Activated CD8-positive, alpha-beta T cell treated with anti-CD3 and anti-CD28 coated beads, Interleukin-2, amount 10 ng/mL, durations not matched to agents 7 days and 5 days (primary cell): ENCODE measurements at regions of chr2 and their contacts with region 1.

Region 1: GRCh38 chr2:215949991-215950404 is 63.4 kb downstream of the MREG start:
- DNase-seq: no peak
- ATAC-seq: peak; percentile 72
- H3K4me3 Mint-ChIP-seq: no peak overlapping the region
- H3K27ac Mint-ChIP-seq: no peak overlapping the region
- H3K4me1 Mint-ChIP-seq: no peaks in the 10 kb centered on the region
- H3K27me3 Mint-ChIP-seq: no peaks in the 10 kb centered on the region

Region 2: DNA sequence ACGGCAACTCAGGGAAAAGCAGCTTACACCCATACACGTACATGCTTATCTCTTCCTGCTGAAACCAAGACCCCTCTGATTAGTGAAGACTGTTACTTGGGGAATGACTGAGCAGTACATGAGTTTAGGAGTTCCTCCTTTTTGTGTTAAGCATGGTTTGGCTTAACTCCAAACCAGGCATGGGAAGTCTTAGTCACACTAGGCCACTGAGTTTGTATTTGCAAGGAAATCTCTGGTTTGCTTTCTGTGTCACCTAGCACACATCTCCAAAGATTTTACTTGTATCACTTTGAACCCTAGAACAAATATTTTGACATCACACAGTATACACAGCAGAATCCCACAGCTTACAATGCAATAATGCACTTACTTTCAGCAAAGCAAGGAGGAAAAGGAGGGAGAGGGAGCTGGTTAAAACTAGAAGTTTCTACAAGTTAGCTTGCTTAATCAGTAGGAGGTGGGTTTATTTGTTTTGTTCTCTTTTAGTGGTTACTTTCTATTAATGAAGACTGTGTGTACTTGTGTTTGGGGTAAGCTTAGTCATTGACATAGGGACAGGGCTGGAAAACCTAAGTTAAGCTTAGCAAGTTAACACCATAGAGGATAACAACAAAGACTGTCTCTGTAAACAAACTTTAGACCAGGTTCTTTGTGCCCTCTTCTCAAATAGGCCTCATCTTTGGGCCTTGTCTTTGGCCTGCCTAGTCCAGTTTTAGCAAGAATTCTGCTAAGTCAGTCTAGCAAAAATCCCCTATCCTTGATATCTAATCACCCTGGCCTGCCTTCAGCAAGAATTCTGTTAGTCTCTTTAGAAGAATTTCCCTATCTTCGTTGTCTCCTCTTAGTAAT is 156.0 kb before region 1 on chr2:
- CTCF ChIA-PET with region 1: no interaction called
- POLR2A ChIA-PET with region 1: no interaction called
- DNase-seq: no peak
- ATAC-seq: no peak
- H3K4me3 Mint-ChIP-seq: no peak overlapping the region
- H3K27ac Mint-ChIP-seq: no peak overlapping the region
- H3K4me1 Mint-ChIP-seq: peaks cover 14% of the 10 kb centered on the region
- H3K27me3 Mint-ChIP-seq: no peaks in the 10 kb centered on the region

Region 3: GRCh38 chr2:215931256-215931903 is 18.6 kb before region 1 on chr2:
- CTCF ChIA-PET with region 1: interaction called, 11 read pairs
- POLR2A ChIA-PET with region 1: no interaction called
- DNase-seq: peak; percentile 74
- ATAC-seq: peak; percentile 80
- H3K4me3 Mint-ChIP-seq: no peak overlapping the region
- H3K27ac Mint-ChIP-seq: no peak overlapping the region
- H3K4me1 Mint-ChIP-seq: peaks cover 9% of the 10 kb centered on the region
- H3K27me3 Mint-ChIP-seq: peaks cover 10% of the 10 kb centered on the region

Region 4: DNA sequence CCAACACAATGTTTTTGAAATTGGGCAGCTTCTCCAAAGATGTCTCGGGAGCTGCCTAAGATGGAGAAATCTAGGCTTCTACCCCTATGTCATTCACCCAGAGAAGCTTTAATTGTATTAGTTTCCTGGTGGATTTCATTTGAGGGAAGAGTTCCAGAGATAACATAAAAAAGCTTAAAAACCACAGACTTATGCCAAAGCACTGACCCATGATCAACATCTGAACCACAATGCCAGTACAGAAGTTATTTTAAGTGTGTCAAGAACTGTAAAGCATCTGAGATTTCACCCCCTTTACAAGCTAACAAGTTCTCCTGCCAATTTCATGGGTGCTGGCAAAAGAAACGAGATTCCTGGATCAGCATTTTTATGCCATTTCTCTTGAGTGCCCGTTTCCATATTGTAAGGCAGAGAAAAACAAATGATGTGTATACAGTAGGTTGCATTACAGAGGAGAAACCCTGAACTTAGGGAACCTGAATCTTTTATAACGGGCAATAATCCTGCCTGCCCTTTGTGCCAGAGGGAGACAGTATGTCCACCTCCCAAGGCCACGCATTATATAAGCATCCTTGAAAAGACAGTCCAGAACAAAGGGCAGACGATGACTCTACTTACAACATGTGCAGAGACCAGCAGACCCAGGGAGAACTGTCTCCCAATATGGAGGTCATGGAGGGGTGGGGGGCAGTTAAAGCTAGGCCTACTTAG is 19.3 kb after region 1 on chr2:
- CTCF ChIA-PET with region 1: interaction called, 21 read pairs
- POLR2A ChIA-PET with region 1: no interaction called
- DNase-seq: no peak
- ATAC-seq: no peak
- H3K4me3 Mint-ChIP-seq: no peak overlapping the region
- H3K27ac Mint-ChIP-seq: no peak overlapping the region
- H3K4me1 Mint-ChIP-seq: peaks cover 50% of the 10 kb centered on the region
- H3K27me3 Mint-ChIP-seq: no peaks in the 10 kb centered on the region

Region 5: DNA sequence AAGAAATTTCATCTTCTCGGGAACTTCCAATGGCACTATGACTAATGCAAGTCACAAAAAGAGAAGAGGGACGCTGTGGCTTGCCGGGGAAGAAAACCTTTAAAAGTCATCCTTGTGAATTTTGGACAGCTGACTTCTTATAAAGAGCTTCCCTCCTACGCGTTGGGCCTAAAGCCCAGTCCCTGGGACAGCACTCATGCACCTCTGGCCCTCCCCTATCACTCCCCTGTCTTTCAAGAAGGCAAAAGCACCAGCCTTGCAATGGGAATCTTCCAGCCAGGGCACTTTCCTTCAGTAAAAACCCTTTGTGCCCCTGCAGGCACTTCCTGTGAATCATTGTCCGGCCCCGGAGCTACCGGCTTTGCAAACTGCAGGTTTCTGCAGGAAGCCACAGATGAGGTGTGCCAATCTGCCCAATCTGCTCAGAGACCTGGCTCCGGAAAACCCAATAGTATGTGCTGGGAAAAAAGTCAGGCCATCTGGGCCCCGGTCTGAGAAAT is 56.2 kb after region 1 on chr2:
- CTCF ChIA-PET with region 1: interaction called, 26 read pairs
- POLR2A ChIA-PET with region 1: no interaction called
- DNase-seq: peak; percentile 57
- ATAC-seq: peak; percentile 67
- H3K4me3 Mint-ChIP-seq: peak overlapping the region; percentile 37
- H3K27ac Mint-ChIP-seq: peak overlapping the region; percentile 67
- H3K4me1 Mint-ChIP-seq: peaks cover 42% of the 10 kb centered on the region
- H3K27me3 Mint-ChIP-seq: no peaks in the 10 kb centered on the region

Region 6: DNA sequence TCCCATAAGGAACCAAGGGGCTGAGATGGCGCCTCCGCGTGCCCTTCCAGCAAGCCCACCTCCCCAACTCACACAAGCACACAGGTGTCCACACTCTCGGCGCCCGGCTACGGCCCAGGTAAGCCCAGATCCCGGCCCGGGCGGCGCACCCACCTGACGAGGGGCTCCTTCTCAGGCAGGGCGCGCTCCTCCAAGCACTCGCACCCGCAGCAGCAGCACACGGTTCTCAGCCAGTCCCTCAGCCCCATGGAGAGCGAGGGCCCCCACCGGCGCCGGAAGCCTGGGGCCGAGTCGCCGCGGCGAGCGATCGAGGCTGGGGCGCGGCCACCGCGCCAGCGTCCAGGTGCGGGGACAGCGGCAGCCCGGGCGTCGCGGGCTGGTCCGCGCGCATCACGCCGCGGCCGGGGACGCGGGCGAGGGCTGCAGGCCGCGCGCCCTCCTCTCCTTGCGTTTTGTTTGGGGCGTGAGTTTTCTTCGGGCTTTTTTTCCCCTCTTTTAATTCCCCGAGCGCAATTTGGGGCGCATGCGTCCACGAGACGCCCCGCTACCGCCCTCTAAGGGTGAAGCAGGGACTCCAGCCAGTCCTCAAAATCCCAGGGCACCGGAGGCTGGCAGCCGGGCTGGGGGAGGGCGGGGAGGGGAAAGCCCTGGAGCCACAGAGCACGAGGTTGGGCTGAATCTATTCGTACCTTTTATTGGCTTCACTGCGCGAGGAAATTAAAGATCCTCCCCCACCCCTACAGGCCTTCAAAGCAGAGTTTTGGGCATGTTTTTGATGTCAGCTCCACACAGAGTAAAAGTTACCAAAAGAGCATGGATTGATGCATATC is 63.3 kb after region 1 on chr2 and contains the start of gene MREG:
- CTCF ChIA-PET with region 1: interaction called, 34 read pairs
- POLR2A ChIA-PET with region 1: no interaction called
- DNase-seq: peak; percentile 88
- ATAC-seq: peak; percentile 77
- H3K4me3 Mint-ChIP-seq: peak within 1 kb of the TSS; percentile 91
- H3K27ac Mint-ChIP-seq: peak within 1 kb of the TSS; percentile 81
- H3K4me1 Mint-ChIP-seq: peaks cover 50% of the 10 kb centered on the region
- H3K27me3 Mint-ChIP-seq: no peaks in the 10 kb centered on the region
- total RNA-seq, gene MREG: 10.9 to 12.1 TPM

Region 7: DNA sequence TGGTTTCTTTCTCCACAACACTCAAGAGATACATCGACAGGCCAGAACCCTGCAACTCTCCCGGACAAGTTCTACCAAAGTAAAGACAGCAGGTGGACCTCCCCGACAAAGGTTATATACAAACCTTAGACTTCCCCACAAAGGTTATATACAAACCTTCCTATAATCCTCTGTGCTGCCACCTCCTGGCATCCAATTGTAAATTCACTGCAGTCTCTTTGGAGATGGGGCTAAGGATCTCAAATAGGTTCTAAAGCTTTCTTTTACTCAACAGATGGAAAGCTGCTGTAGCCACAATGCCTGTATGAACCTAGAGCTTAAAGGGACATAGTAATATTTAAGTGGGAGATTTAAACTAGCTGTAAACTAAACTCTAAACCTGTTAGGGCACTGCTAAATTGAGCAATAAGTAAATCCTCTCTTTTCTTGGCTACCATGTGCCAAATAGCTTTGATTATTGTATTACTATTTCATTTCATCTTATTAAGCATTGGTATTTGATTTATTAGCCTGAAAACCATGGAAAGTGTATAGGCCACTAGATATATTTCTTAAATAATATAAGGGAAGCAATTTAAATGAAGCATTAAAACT is 73.2 kb after region 1 on chr2:
- CTCF ChIA-PET with region 1: interaction called, 85 read pairs
- POLR2A ChIA-PET with region 1: no interaction called
- DNase-seq: peak; percentile 71
- ATAC-seq: peak; percentile 88
- H3K4me3 Mint-ChIP-seq: no peak overlapping the region
- H3K27ac Mint-ChIP-seq: no peak overlapping the region
- H3K4me1 Mint-ChIP-seq: peaks cover 9% of the 10 kb centered on the region
- H3K27me3 Mint-ChIP-seq: no peaks in the 10 kb centered on the region